Activated naive CD4-positive, alpha-beta T cell treated with anti-CD3 and anti-CD28 coated beads for 36 hours (primary cell): ENCODE measurements at regions of chr5 and their contacts with region 1.

Region 1: DNA sequence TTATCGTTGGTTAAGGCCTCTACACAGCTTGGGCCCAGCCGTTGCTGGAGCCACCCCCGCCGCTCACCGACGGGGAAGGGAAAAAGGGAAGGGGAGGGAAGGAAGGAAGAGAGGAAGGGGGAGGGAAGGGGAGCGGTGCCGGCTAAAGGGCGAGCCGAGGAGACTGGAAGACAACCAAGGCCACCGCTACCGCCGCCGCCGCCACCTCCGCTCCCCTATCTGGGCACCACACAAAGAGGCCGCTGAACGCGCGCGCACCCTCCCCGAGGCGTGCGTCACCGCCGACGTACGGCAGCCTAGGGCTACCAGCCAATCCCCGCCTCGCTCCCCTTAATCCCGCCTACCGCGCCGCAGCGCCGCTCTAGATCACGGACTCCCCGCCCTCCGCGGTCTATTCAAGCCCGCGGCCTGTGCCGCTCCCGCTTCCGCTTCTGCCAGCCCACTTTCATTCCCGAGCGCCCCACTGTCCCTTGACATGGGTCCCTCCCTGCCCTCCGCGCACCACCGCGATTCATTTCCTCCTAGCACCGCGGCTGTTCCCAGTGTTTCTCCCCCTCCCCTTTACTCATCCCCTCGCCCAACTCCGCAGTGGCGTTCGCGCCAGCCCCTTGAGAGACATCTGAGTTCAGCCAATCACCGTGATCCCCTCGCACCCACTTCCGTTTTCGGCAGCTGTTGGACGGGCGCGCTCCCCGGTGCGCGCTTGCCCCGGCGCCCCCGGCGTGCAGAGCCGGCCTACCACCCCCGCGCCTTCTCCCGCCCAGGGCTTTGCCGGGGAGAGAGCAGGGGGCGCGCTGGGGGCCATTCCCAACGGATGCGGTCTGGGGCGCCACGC is at the start of gene HNRNPA0:
- DNase-seq: peak; percentile 97
- H3K4me3 Mint-ChIP-seq: peak within 1 kb of the TSS; percentile 92
- H3K27ac Mint-ChIP-seq: peak within 1 kb of the TSS; percentile 98
- H3K4me1 Mint-ChIP-seq: peaks cover 19% of the 10 kb centered on the region
- H3K27me3 Mint-ChIP-seq: no peaks in the 10 kb centered on the region
- total RNA-seq, gene HNRNPA0: 27.2 to 28.6 TPM

Region 2: DNA sequence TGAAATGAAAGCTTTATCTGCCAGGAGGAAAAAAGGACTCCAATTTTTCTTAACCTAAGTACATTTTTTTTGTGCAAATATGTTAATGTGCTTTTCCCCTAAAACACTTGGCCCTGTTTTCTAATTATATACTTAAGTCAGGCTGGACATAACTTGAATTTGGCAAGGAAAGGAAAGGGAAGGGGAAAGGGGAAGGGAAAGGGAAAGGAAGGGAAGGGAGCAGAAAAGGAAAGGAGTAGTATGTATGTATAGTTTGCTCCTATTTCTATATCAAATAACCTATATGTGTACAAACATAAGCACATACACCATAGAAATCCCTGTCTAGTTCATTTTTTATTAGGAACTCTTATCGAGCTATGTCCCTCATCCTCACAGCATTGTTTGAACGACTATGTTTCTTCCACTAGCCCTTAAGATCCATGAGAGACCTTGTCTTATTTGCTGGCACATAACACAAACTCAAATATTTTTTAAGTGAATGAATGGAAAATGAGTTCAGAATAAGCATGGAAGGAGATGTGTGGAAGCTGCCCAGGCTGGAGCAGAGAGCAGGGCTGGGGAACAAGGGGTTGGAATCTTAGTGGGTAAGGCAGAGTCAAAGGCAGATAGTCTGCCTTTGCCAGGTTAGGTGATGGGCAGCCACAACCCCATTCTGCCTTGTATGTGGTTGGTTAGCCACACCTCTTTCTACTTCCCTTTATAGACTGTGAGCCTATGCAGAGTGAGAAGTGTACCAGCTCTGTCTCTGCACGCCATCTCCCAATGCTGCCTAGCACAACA is 88.5 kb before region 1 on chr5:
- CTCF ChIA-PET with region 1: interaction called, 508 read pairs
- intact Hi-C with region 1: no loop called
- DNase-seq: peak; percentile 67
- H3K4me3 Mint-ChIP-seq: no peak overlapping the region
- H3K27ac Mint-ChIP-seq: peak overlapping the region; percentile 25
- H3K4me1 Mint-ChIP-seq: peaks cover 24% of the 10 kb centered on the region
- H3K27me3 Mint-ChIP-seq: no peaks in the 10 kb centered on the region

Region 3: DNA sequence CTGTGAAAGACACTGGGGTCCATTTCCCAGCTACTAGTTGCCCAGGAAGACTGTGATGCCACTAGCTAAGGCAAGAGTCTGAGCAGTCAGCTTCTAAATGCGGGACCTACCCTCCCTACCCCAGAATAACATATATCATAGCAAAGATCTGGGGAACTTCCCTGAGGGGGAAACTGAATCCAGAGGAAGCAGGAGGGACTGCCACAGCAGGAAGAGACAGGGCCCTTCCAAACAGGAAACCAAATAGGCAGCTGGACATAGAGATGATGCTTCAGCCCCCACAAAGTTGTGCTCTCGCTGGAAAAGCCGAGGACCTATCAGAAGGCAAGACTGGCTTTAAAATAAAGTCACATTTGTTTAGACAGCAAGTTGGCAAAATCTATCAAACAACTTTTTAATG is 69.6 kb before region 1 on chr5:
- CTCF ChIA-PET with region 1: no interaction called
- intact Hi-C with region 1: no loop called
- DNase-seq: no peak
- H3K4me3 Mint-ChIP-seq: no peak overlapping the region
- H3K27ac Mint-ChIP-seq: no peak overlapping the region
- H3K4me1 Mint-ChIP-seq: no peaks in the 10 kb centered on the region
- H3K27me3 Mint-ChIP-seq: no peaks in the 10 kb centered on the region

Region 4: GRCh38 chr5:137792303-137792702 is 38.0 kb after region 1 on chr5:
- CTCF ChIA-PET with region 1: no interaction called
- intact Hi-C with region 1: no loop called
- DNase-seq: no peak
- H3K4me3 Mint-ChIP-seq: no peak overlapping the region
- H3K27ac Mint-ChIP-seq: no peak overlapping the region
- H3K4me1 Mint-ChIP-seq: no peaks in the 10 kb centered on the region
- H3K27me3 Mint-ChIP-seq: no peaks in the 10 kb centered on the region

Region 5: GRCh38 chr5:137888857-137889759 is 134.8 kb after region 1 on chr5 and contains the start of gene PKD2L2:
- CTCF ChIA-PET with region 1: interaction called, 4 read pairs
- intact Hi-C with region 1: loop called (anchors 1 kb)
- DNase-seq: peak; percentile 84
- H3K4me3 Mint-ChIP-seq: peak within 1 kb of the TSS; percentile 88
- H3K27ac Mint-ChIP-seq: peak within 1 kb of the TSS; percentile 87
- H3K4me1 Mint-ChIP-seq: peaks cover 21% of the 10 kb centered on the region
- H3K27me3 Mint-ChIP-seq: peaks cover 4% of the 10 kb centered on the region
- total RNA-seq, gene PKD2L2: not detected

Region 6: GRCh38 chr5:138035605-138036537 is 281.5 kb after region 1 on chr5:
- CTCF ChIA-PET with region 1: no interaction called
- intact Hi-C with region 1: loop called (anchors 1 kb)
- DNase-seq: peak; percentile 76
- H3K4me3 Mint-ChIP-seq: no peak overlapping the region
- H3K27ac Mint-ChIP-seq: no peak overlapping the region
- H3K4me1 Mint-ChIP-seq: peaks cover 31% of the 10 kb centered on the region
- H3K27me3 Mint-ChIP-seq: no peaks in the 10 kb centered on the region

Region 7: GRCh38 chr5:138054847-138055558 is 300.7 kb after region 1 on chr5:
- CTCF ChIA-PET with region 1: no interaction called
- intact Hi-C with region 1: no loop called
- DNase-seq: no peak
- H3K4me3 Mint-ChIP-seq: no peak overlapping the region
- H3K27ac Mint-ChIP-seq: no peak overlapping the region
- H3K4me1 Mint-ChIP-seq: peaks cover 8% of the 10 kb centered on the region
- H3K27me3 Mint-ChIP-seq: no peaks in the 10 kb centered on the region

Region 8: DNA sequence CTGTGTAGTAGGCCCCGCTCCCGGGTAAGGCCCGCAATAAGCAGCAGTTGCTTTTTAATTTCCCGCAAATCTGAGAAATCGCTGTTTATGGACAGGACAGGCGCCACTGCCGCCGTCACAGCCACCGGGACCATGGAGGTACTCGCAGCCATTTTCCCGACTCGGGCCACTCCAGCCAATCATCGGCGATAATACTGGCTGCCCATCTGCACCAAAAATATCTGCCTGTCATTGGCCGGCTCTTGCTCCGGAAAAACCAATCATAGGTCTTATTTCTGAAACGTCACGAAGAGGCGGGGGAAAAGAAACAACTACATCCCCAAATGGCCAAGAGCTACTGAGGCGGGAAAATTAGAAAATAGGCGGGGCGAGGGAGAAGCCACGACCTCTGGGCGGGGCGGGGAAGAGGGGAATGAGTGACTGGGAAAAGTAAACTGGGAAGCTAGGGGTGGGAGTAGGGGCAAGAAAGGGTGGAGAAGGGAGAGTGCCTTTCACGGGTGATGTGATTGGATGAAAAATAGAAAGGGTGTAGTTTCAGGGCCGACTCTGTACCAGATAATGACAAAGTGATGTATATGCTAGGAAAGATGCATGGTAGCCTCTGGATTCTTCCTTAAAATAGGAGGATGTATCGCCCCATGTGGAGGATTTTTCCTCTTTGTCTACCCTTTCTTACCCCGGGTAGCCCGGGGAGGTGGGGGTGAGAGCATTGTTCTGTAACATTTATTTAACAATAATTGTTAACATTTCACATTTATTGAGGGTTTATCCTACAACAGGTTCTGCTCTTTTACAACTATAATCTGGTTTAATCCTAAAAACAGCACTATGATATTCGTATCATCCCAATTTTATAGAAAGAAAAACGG is 459.1 kb after region 1 on chr5 and contains the start of gene CDC23:
- CTCF ChIA-PET with region 1: no interaction called
- intact Hi-C with region 1: loop called (anchors 2 kb)
- DNase-seq: peak; percentile 96
- H3K4me3 Mint-ChIP-seq: peak within 1 kb of the TSS; percentile 98
- H3K27ac Mint-ChIP-seq: peak within 1 kb of the TSS; percentile 89
- H3K4me1 Mint-ChIP-seq: peaks cover 18% of the 10 kb centered on the region
- H3K27me3 Mint-ChIP-seq: no peaks in the 10 kb centered on the region
- total RNA-seq, gene CDC23: 44.3 to 47.2 TPM

Region 9: DNA sequence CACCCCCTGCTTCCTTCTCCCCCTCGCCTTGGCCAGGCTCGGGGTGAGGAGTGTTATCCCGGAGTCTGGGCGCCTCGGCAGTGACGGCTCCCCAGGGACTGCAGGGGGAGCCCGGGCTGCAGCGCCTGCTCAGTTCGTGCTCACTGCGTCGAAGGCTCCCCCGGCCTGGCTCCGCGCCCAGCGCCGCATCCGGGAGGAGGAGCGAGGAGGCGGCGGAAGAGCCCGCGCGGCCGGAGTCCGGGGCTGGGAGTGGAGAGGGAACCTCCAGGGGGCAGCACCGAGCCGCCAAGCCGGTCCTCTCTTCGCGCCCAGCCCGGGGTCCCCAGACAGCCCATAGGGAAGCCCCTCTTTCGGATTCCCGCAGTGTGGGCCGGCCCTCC is 709.7 kb after region 1 on chr5:
- CTCF ChIA-PET with region 1: no interaction called
- intact Hi-C with region 1: loop called (anchors 1 kb)
- DNase-seq: peak; percentile 95
- H3K4me3 Mint-ChIP-seq: peak overlapping the region; percentile 83
- H3K27ac Mint-ChIP-seq: peak overlapping the region; percentile 93
- H3K4me1 Mint-ChIP-seq: peaks cover 59% of the 10 kb centered on the region
- H3K27me3 Mint-ChIP-seq: no peaks in the 10 kb centered on the region